Breast epithelium (tissue), 4 donors: ENCODE measurements at regions of chr7 and their contacts with region 1.

Region 1: DNA sequence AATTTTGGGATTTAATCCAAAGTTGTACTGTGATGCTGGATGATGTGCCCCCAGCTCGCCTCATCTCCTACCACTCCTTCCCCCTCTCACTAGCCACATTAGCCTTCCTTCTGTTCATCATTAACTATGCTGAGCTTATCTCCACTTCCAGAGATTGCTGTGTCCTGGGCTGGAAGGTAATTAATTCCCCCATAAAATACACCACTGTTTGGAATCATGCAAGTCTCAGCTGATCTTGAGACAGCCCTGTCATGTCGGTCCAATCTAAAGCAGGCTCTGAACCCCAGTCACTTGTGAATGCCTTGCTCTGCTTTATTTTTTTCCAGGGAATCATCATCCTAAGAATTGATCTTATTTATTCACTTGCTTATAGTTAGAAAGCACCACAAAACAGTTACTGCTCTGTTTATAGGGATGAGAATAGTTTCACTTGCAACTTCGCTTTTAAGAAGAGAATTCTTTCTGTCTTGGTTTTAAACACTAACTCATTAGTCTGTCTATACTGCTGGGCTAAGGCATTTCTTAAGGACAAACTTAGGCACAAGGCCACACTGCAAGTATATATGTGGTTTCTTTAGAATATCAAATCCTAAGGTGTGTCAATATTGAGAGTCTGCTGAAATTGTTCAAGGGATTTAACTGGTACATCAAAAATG is 341.1 kb upstream of the SEMA3A start:
- DNase-seq: no peak
- H3K4me3 ChIP-seq: no peak overlapping the region
- H3K27ac ChIP-seq: no peak overlapping the region
- H3K4me1 ChIP-seq: no peaks in the 10 kb centered on the region
- H3K27me3 ChIP-seq: no peaks in the 10 kb centered on the region
- CTCF ChIP-seq: no peak
- POLR2A ChIP-seq: no peak

Region 2: DNA sequence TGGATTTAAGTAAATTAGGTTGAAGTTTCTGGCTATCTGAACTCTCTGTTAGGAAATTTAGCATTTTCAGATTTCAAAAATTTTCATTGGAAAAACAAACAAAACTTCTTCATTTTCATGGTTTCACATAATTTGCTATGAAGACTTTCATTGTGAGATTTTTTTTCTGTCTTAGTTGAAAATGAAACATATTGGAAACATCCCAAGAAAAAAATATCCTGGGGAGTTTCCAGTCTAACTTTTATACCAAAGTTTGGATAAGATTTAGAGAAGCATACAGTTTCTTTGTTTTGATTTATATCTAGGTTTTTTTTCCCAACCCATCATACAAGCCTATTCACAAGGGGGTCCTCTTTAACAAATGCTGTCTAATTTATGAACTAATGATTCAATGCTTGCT is 40.6 kb before region 1 on chr7:
- intact Hi-C with region 1: loop called (anchors 2 kb)
- DNase-seq: no peak
- H3K4me3 ChIP-seq: no peak overlapping the region
- H3K27ac ChIP-seq: no peak overlapping the region
- H3K4me1 ChIP-seq: no peaks in the 10 kb centered on the region
- H3K27me3 ChIP-seq: no peaks in the 10 kb centered on the region
- CTCF ChIP-seq: no peak
- POLR2A ChIP-seq: no peak

Region 3: GRCh38 chr7:85261336-85261735 is 725.6 kb after region 1 on chr7:
- intact Hi-C with region 1: no loop called
- DNase-seq: no peak
- H3K4me3 ChIP-seq: no peak overlapping the region
- H3K27ac ChIP-seq: no peak overlapping the region
- H3K4me1 ChIP-seq: no peaks in the 10 kb centered on the region
- H3K27me3 ChIP-seq: no peaks in the 10 kb centered on the region
- CTCF ChIP-seq: no peak
- POLR2A ChIP-seq: no peak